CD4-positive, alpha-beta T cell (primary cell): ENCODE measurements at regions of chr7 and their contacts with region 1.

Region 1: GRCh38 chr7:86926732-86927131 is 132.7 kb downstream of the ELAPOR2 start:
- DNase-seq: peak in 8 of 14 experiments; percentile 8 to 72 (median 34)
- ATAC-seq: peak; percentile 94
- H3K4me3 ChIP-seq: no peak overlapping the region
- H3K4me3 Mint-ChIP-seq: no peak overlapping the region
- H3K27ac ChIP-seq: no peak overlapping the region
- H3K27ac Mint-ChIP-seq: no peak overlapping the region
- H3K4me1 ChIP-seq: no peaks in the 10 kb centered on the region
- H3K4me1 Mint-ChIP-seq: no peaks in the 10 kb centered on the region
- H3K27me3 ChIP-seq: no peaks in the 10 kb centered on the region
- H3K27me3 Mint-ChIP-seq: peaks cover 4% of the 10 kb centered on the region
- CTCF ChIP-seq: peak; percentile 78

Region 2: DNA sequence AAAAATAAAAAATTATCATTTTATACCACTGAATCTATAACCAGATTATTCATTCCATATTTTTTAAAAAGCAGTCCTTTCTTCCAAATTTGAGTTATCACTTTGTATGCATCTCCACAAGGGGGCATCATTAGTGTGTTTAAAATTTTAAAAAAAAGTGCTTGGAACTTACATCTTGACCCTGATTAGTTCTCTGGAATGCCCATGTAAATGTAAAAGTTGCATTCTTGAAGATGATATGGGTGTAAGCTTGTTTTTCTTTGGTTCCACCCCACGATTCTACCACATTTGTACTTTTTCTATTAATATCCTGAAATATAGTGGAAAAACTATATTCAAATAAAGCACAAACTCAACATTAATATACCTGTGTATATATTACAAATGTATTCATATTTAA is 12.2 kb before region 1 on chr7:
- CTCF ChIA-PET with region 1: interaction called, 11 read pairs
- POLR2A ChIA-PET with region 1: no interaction called
- intact Hi-C with region 1: no loop called
- DNase-seq: peak in 3 of 14 experiments; percentile 11 to 27 (median 16)
- ATAC-seq: no peak
- H3K4me3 ChIP-seq: no peak overlapping the region
- H3K4me3 Mint-ChIP-seq: no peak overlapping the region
- H3K27ac ChIP-seq: no peak overlapping the region
- H3K27ac Mint-ChIP-seq: no peak overlapping the region
- H3K4me1 ChIP-seq: no peaks in the 10 kb centered on the region
- H3K4me1 Mint-ChIP-seq: no peaks in the 10 kb centered on the region
- H3K27me3 ChIP-seq: no peaks in the 10 kb centered on the region
- H3K27me3 Mint-ChIP-seq: peaks cover 9% of the 10 kb centered on the region
- CTCF ChIP-seq: peak; percentile 56

Region 3: DNA sequence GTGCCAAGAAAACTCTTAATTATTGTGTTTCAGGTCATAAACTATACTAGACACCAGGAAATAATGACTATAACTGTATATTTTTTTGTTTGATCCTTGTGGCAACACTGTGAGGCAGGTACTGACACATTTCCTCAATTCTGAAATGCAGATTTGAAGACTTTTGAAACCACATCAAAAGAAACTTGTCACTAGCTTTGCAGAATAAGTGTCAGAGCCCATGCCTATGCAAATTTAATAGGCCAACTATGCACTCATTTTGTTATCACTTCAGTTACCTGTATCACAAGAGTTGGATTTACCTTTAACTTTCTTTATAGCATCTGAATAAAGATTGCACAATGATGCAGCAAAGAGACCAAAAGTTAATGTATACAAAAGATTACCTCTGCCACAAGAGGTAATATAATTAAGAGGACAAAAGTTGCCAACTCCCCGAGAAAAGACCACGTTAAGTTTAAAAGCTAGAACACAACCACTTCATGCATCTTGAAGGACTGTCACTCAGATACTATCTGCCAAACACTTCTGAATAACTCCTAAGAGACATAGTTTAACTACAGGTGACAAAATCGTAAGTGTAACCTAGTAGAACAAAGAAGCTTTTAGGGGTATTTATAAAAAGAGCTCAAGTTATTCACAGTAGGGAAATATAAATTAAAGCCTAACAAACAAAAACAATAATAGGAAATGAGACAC is 52.2 kb after region 1 on chr7:
- CTCF ChIA-PET with region 1: no interaction called
- POLR2A ChIA-PET with region 1: no interaction called
- intact Hi-C with region 1: loop called in 1 of 2 experiments (anchors 5 kb)
- DNase-seq: peak in 6 of 14 experiments; percentile 5 to 90 (median 58)
- ATAC-seq: peak; percentile 90
- H3K4me3 ChIP-seq: no peak overlapping the region
- H3K4me3 Mint-ChIP-seq: peak overlapping the region; percentile 5
- H3K27ac ChIP-seq: peak overlapping the region; percentile 36 to 47
- H3K27ac Mint-ChIP-seq: peak overlapping the region; percentile 86
- H3K4me1 ChIP-seq: peaks cover 21% of the 10 kb centered on the region
- H3K4me1 Mint-ChIP-seq: peaks cover 54% of the 10 kb centered on the region
- H3K27me3 ChIP-seq: no peaks in the 10 kb centered on the region
- H3K27me3 Mint-ChIP-seq: no peaks in the 10 kb centered on the region
- CTCF ChIP-seq: no peak

Region 4: DNA sequence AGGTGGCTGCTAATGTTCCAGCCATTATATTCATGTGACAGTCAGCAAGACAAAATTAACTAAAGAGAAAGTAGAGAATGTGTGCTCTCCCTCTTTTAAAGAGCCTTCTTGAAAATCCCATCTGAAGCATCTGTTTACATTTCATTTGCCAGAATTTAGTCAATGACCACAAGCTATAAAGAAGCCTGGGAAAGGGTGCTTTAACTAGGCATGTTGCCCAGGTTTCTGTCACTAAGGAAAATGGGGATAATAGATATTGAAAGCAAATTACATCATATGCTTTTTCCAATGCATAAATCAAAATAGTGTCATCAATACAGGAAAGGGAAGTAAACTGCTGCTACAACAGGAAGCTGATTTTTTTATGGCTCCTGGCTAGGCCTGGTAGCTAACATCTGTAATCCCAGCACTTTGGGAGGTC is 65.0 kb after region 1 on chr7:
- CTCF ChIA-PET with region 1: interaction called, 7 read pairs
- POLR2A ChIA-PET with region 1: no interaction called
- intact Hi-C with region 1: loop called in 1 of 2 experiments (anchors 2 kb)
- DNase-seq: no peak
- ATAC-seq: no peak
- H3K4me3 ChIP-seq: no peak overlapping the region
- H3K4me3 Mint-ChIP-seq: no peak overlapping the region
- H3K27ac ChIP-seq: no peak overlapping the region
- H3K27ac Mint-ChIP-seq: no peak overlapping the region
- H3K4me1 ChIP-seq: no peaks in the 10 kb centered on the region
- H3K4me1 Mint-ChIP-seq: peaks cover 6% of the 10 kb centered on the region
- H3K27me3 ChIP-seq: no peaks in the 10 kb centered on the region
- H3K27me3 Mint-ChIP-seq: peaks cover 7% of the 10 kb centered on the region
- CTCF ChIP-seq: no peak

Region 5: DNA sequence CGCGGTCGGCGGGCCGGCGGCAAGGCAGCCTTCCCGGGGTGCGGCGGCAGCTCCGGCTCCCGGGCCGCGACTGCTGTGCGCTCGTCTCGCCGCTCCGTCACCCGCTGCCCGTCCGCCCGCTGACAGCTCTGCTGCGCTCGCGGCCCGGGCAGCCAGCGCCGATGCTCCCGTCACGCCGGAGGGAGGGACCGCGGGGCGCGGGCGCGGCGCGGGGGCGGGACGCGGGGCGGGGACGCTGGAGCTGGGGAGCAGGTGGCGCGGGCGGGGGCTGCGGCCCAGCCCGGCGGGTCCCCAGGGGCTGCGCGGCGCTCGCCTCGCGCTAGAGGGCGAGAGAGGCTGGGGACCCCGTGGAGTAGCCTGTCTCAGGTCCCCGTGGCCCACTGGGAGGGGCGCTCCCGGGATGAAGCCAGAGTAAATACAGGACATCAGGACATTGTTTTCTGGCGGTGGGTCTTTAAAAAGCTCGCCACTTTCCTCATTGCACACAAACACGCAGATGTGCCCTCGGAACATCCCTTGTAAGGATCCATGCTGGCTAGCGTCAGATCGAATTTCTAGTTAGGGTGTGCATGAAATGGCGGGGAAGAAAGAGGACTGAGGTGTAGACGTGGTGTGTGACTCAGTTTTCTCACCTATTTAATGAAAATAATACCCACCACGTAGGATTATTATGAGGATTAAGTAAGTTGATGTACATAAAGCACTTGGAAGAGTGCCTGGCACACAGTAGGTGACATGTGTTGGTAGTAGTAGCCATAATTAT is 133.0 kb after region 1 on chr7 and contains the start of gene ELAPOR2:
- CTCF ChIA-PET with region 1: interaction called, 4 read pairs
- POLR2A ChIA-PET with region 1: no interaction called
- intact Hi-C with region 1: loop called in 1 of 2 experiments (anchors 5 kb)
- DNase-seq: peak; percentile 61 to 91 (median 76)
- ATAC-seq: peak; percentile 93
- H3K4me3 ChIP-seq: peak within 1 kb of the TSS; percentile 66
- H3K4me3 Mint-ChIP-seq: peak within 1 kb of the TSS; percentile 92
- H3K27ac ChIP-seq: no peak within 1 kb of the TSS
- H3K27ac Mint-ChIP-seq: peak within 1 kb of the TSS; percentile 75
- H3K4me1 ChIP-seq: peaks cover 12% of the 10 kb centered on the region
- H3K4me1 Mint-ChIP-seq: peaks cover 13% of the 10 kb centered on the region
- H3K27me3 ChIP-seq: peaks cover 0 to 3% of the 10 kb centered on the region in 2 experiments
- H3K27me3 Mint-ChIP-seq: peaks cover 13% of the 10 kb centered on the region
- CTCF ChIP-seq: peak; percentile 46
- total RNA-seq, gene ELAPOR2: 7.2 to 7.7 TPM

Region 6: DNA sequence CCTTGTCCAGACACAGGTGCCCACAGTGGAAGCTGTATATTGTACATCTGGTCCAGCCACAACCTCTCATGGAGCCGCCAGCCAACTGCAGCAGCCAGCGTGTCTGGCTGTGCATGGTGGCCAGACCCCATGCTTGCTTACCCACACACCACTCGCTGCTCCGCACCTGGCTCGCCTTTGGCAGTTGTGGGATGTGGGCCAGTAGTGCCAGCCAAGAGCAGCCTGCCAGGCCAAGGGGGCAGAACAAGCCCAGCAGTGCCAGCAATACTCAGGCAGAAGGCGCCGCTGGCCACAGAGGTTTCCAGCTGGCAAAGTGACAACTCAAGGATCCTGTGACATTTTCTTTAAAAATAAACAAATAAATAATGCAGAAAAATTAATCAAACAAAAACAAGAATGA is 304.5 kb after region 1 on chr7:
- CTCF ChIA-PET with region 1: interaction called, 3 read pairs
- POLR2A ChIA-PET with region 1: no interaction called
- intact Hi-C with region 1: loop called in 1 of 2 experiments (anchors 2 kb)
- DNase-seq: no peak
- ATAC-seq: no peak
- H3K4me3 ChIP-seq: no peak overlapping the region
- H3K4me3 Mint-ChIP-seq: no peak overlapping the region
- H3K27ac ChIP-seq: no peak overlapping the region
- H3K27ac Mint-ChIP-seq: no peak overlapping the region
- H3K4me1 ChIP-seq: no peaks in the 10 kb centered on the region
- H3K4me1 Mint-ChIP-seq: no peaks in the 10 kb centered on the region
- H3K27me3 ChIP-seq: no peaks in the 10 kb centered on the region
- H3K27me3 Mint-ChIP-seq: no peaks in the 10 kb centered on the region
- CTCF ChIP-seq: no peak

Region 7: GRCh38 chr7:87416682-87417587 is 490.2 kb after region 1 on chr7:
- CTCF ChIA-PET with region 1: interaction called, 3 read pairs
- POLR2A ChIA-PET with region 1: no interaction called
- intact Hi-C with region 1: loop called (anchors 5 kb)
- DNase-seq: peak; percentile 32 to 82 (median 60)
- ATAC-seq: peak; percentile 63
- H3K4me3 ChIP-seq: no peak overlapping the region
- H3K4me3 Mint-ChIP-seq: no peak overlapping the region
- H3K27ac ChIP-seq: no peak overlapping the region
- H3K27ac Mint-ChIP-seq: no peak overlapping the region
- H3K4me1 ChIP-seq: no peaks in the 10 kb centered on the region
- H3K4me1 Mint-ChIP-seq: no peaks in the 10 kb centered on the region
- H3K27me3 ChIP-seq: no peaks in the 10 kb centered on the region
- H3K27me3 Mint-ChIP-seq: no peaks in the 10 kb centered on the region
- CTCF ChIP-seq: peak; percentile 76